ENCODE measurements at regions of chr9 and their contacts with region 1.

Region 1: GRCh38 chr9:127854184-127854806 is at the start of gene ENG:
- DNase-seq: peak in 1 of 3 donors; percentile 43
- H3K4me3 ChIP-seq: peak within 1 kb of the TSS; percentile 15 to 84 (median 78)
- H3K27ac ChIP-seq: peak within 1 kb of the TSS; percentile 46 to 67
- H3K4me1 ChIP-seq: peaks cover 11 to 76% (median 73%) of the 10 kb centered on the region in 4 experiments
- H3K27me3 ChIP-seq: no peaks in the 10 kb centered on the region

Region 2: DNA sequence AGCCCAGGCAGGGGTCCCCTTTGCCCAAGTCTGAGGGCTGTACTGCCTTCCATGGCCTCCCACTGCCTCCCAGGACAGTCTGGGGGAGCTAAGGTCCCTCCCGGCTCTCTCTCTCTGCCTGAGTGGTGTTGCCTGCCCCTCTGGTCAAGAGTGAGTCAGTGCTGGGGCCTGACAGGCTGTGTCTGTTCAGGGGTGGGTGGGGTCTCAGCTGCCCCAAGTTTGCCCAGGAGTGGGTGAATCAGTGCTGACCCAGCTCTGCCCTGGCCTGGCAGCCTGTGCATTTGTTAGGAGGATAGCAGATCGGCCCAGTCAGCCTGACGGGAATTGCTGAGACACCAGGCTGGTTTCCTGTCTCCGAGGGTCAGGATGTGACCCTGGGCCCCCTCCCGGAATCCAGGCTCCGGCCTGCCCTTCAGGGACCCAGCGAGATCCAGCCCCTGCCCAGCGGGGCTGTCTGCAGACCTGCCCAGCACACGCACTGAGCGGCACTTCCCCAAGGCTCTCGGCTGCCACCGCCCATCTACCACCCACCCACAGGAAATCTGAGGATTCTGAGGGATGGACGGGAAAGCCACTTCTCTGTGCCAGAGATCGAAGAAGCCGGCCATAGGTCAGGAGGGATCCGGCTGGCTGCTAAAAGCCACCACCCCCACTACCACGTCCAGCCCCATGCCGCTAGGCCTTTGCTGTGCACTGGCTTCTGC is 15.8 kb before region 1 on chr9:
- CTCF ChIA-PET with region 1: interaction called, 62 read pairs
- POLR2A ChIA-PET with region 1: interaction called, 5 read pairs
- DNase-seq: no peak
- H3K4me3 ChIP-seq: peak overlapping the region in 2 of 7 experiments; percentile 9 to 10
- H3K27ac ChIP-seq: peak overlapping the region in 1 of 2 experiments; percentile 33
- H3K4me1 ChIP-seq: peaks cover 0 to 53% (median 48%) of the 10 kb centered on the region in 4 experiments
- H3K27me3 ChIP-seq: no peaks in the 10 kb centered on the region